H1 (cell line): ENCODE measurements at regions of chr2 and their contacts with region 1.

Region 1: DNA sequence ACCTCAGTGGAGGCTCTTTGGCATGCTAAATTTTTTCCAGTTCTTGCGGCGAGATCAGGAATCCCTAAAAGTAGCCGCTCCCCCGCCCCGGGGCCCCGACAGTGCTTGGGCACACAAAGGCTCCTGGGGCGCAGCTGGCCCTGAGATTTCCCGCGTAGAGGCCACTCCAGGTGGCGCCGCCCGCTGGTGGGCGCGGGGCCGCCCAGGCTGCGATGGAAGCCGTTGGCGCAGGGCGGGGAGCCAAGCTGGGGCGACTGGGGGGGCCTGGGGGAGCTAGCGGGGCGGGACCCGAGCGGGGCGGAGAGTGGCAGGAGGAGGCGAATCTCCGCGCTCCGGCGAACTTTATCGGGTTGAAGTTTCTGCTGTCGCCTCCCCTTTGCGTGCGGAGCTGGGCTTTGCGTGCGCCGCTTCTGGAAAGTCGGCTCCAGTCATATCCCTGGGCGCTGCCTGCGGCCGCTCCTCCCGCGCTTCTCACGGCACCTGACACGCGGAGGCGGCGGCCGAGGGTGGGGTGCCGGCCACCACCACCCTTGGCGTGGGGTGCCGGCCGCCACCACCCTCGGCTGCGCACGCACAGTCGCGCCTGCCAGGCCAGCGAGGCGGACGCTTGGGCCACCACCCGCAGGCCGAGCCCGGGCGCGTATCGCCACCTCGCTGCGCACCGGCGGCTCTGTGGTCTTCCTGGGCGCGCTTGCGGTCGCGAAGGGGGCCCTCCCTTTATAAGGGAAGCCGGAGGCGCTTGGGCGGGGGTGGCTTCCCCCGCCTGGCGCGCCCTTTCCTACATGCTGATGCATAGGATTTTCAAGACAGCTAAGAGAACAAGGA is 867 bp upstream of the CYP1B1 start:
- DNase-seq: peak in 1 of 2 experiments; percentile 83
- H3K4me3 ChIP-seq: peak overlapping the region; percentile 26 to 63 (median 51)
- H3K27ac ChIP-seq: no peak overlapping the region
- H3K4me1 ChIP-seq: peaks cover 14 to 37% (median 23%) of the 10 kb centered on the region in 4 experiments
- H3K27me3 ChIP-seq: peaks cover 31 to 54% (median 48%) of the 10 kb centered on the region in 4 experiments
- CTCF ChIP-seq: peak in 2 of 3 experiments; percentile 6 to 32; a peak in 2 of 4 replicates
- EP300 ChIP-seq: no peak
- POLR2A ChIP-seq: no peak
- RAD21 ChIP-seq: no peak

Region 2: GRCh38 chr2:38095996-38096861 is 19.4 kb after region 1 on chr2:
- CTCF ChIA-PET with region 1: interaction called, 70 read pairs
- POLR2A ChIA-PET with region 1: interaction called, 29 read pairs
- DNase-seq: no peak
- H3K4me3 ChIP-seq: no peak overlapping the region
- H3K27ac ChIP-seq: no peak overlapping the region
- H3K4me1 ChIP-seq: peaks cover 13 to 34% (median 21%) of the 10 kb centered on the region in 4 experiments
- H3K27me3 ChIP-seq: peaks cover 5 to 39% (median 34%) of the 10 kb centered on the region in 4 experiments
- CTCF ChIP-seq: no peak
- EP300 ChIP-seq: no peak
- POLR2A ChIP-seq: no peak
- RAD21 ChIP-seq: no peak

Region 3: GRCh38 chr2:38106405-38107094 is 29.7 kb after region 1 on chr2:
- CTCF ChIA-PET with region 1: interaction called, 17 read pairs
- POLR2A ChIA-PET with region 1: interaction called, 7 read pairs
- DNase-seq: no peak
- H3K4me3 ChIP-seq: no peak overlapping the region
- H3K27ac ChIP-seq: peak overlapping the region; percentile 3; the same call in 1 of the 2 replicates
- H3K4me1 ChIP-seq: peaks cover 6 to 15% (median 10%) of the 10 kb centered on the region in 4 experiments
- H3K27me3 ChIP-seq: no peaks in the 10 kb centered on the region
- CTCF ChIP-seq: no peak
- EP300 ChIP-seq: no peak
- POLR2A ChIP-seq: no peak
- RAD21 ChIP-seq: no peak

Region 4: GRCh38 chr2:38115216-38116032 is 38.6 kb after region 1 on chr2:
- CTCF ChIA-PET with region 1: interaction called, 76 read pairs
- POLR2A ChIA-PET with region 1: interaction called, 7 read pairs
- DNase-seq: peak; percentile 54 to 98
- H3K4me3 ChIP-seq: no peak overlapping the region
- H3K27ac ChIP-seq: no peak overlapping the region
- H3K4me1 ChIP-seq: no peaks in the 10 kb centered on the region
- H3K27me3 ChIP-seq: no peaks in the 10 kb centered on the region
- CTCF ChIP-seq: peak; percentile 89 to 99 (median 94)
- EP300 ChIP-seq: no peak
- POLR2A ChIP-seq: no peak
- RAD21 ChIP-seq: peak; percentile 96 to 98

Region 5: GRCh38 chr2:38122344-38122743 is 45.5 kb after region 1 on chr2:
- CTCF ChIA-PET with region 1: interaction called, 12 read pairs
- POLR2A ChIA-PET with region 1: interaction called, 3 read pairs
- DNase-seq: no peak
- H3K4me3 ChIP-seq: no peak overlapping the region
- H3K27ac ChIP-seq: no peak overlapping the region
- H3K4me1 ChIP-seq: no peaks in the 10 kb centered on the region
- H3K27me3 ChIP-seq: no peaks in the 10 kb centered on the region; a peak in 1 of 7 replicates
- CTCF ChIP-seq: no peak
- EP300 ChIP-seq: no peak
- POLR2A ChIP-seq: no peak
- RAD21 ChIP-seq: no peak

Region 6: DNA sequence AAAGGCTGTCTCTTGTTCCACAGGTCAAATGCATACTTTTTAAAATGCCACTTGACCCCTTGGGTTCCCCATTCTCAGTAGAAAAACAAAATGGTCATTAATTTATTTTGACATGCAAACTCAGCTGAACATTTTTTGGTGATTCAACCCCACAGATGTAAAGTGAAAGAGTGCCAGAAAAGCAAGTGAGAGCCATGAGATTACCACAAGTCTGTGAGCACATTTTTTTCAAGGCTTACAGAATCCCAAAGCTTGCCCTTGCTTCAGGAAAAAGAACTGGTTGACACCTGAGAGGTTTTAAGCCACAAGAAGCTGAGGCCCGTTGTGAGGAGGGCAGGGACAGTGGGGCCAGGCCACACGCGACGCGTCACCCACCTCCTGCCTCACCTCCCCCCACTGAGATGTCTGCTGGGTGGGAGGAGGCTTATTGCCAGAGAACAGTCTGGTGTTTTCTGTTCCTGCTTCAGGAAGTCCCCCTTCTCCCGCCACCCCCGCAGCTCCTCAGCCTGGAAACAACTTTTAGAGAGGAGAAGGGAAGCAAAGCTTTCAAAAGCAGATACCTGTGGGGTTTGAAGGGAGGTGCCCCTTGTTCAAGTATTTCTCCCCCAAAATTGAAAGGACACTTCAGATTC is 69.6 kb after region 1 on chr2:
- CTCF ChIA-PET with region 1: no interaction called
- POLR2A ChIA-PET with region 1: no interaction called
- DNase-seq: peak in 1 of 2 experiments; percentile 15
- H3K4me3 ChIP-seq: no peak overlapping the region
- H3K27ac ChIP-seq: no peak overlapping the region
- H3K4me1 ChIP-seq: peaks cover 0 to 3% (median 2%) of the 10 kb centered on the region in 4 experiments; a peak in 5 of 7 replicates
- H3K27me3 ChIP-seq: no peaks in the 10 kb centered on the region
- CTCF ChIP-seq: no peak
- EP300 ChIP-seq: no peak
- POLR2A ChIP-seq: no peak
- RAD21 ChIP-seq: no peak

Region 7: GRCh38 chr2:38274286-38275276 is 197.8 kb after region 1 on chr2:
- CTCF ChIA-PET with region 1: interaction called, 42 read pairs
- POLR2A ChIA-PET with region 1: interaction called, 3 read pairs
- DNase-seq: no peak
- H3K4me3 ChIP-seq: no peak overlapping the region
- H3K27ac ChIP-seq: no peak overlapping the region
- H3K4me1 ChIP-seq: peaks cover 2 to 20% (median 14%) of the 10 kb centered on the region in 4 experiments; a peak in 5 of 7 replicates
- H3K27me3 ChIP-seq: no peaks in the 10 kb centered on the region
- CTCF ChIP-seq: peak in 2 of 3 experiments; percentile 39 to 49; a peak in 2 of 4 replicates
- EP300 ChIP-seq: no peak
- POLR2A ChIP-seq: no peak
- RAD21 ChIP-seq: peak; percentile 84 to 85